ENCODE measurements at regions of chr14 and their contacts with region 1.

Region 1: DNA sequence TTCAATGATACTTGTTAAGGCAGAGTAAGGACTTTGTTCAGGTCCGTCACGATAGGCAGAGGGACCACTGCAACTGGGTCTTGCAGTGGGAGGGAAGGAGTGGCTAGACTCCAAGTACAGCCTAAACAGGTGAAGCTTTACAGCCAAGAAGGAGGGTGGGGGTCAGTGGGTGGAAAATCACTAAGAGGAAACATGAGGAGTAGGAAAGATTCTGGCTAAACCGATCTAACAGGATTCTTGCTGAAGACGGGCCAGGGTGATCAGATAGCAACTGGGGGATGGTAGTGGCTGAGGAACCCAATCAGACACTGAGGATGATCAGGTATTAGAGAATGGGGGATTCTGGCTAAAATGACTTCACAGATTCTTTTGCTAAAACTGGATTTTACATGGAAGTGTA is 100.2 kb downstream of the TTC7B start:
- DNase-seq: no peak
- H3K4me3 ChIP-seq: no peak overlapping the region
- H3K27ac ChIP-seq: no peak overlapping the region
- H3K4me1 ChIP-seq: peaks cover 11% of the 10 kb centered on the region
- H3K27me3 ChIP-seq: no peaks in the 10 kb centered on the region
- CTCF ChIP-seq: no peak

Region 2: GRCh38 chr14:90235179-90235976 is 480.6 kb before region 1 on chr14:
- CTCF ChIA-PET with region 1: no interaction called
- POLR2A ChIA-PET with region 1: no interaction called
- intact Hi-C with region 1: no loop called
- DNase-seq: peak; percentile 82
- H3K4me3 ChIP-seq: no peak overlapping the region
- H3K27ac ChIP-seq: no peak overlapping the region
- H3K4me1 ChIP-seq: no peaks in the 10 kb centered on the region
- H3K27me3 ChIP-seq: no peaks in the 10 kb centered on the region
- CTCF ChIP-seq: peak; percentile 94

Region 3: DNA sequence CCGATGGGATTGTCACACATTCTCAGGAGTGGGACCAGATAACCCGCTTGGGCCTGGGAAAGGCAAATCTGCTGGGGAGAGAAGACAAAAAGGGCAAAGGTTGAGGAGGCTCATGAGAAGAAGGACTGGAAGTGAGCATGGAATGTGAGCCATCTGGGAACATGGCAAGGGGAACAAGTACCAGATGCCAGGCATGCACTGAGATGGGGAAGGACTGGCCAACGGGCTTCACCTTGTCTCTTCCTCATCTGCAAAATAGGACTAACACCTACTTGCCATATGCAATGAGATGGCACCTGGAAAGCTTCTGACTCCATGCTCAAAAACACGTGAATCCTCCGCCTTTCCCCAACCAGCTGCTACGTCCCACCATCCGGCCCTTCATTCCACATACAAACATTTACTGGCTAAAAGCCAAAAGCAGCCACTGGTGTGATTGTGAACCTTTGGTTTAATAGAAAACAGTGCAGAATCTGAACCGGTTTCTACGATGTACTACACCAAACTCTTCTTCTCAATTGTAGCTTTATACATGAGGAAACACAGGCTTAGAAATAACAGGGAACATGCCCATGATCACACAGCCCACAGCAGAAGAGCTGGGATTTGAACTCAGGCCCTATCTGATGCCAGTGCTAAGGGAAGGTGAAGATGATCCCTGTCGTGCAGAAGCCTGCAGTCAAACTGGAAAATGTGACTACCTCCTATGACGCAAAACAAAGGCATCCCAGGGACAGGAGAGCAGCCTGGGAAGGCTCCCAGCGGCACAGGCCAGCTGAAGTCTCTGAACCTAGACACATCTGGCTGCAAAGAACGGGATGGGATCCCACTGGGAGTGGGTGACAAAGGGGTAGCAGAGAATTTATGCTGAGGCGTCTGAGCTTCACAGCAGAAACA is 11.9 kb before region 1 on chr14:
- CTCF ChIA-PET with region 1: interaction called, 5 read pairs
- POLR2A ChIA-PET with region 1: no interaction called
- intact Hi-C with region 1: loop called (anchors 1 kb)
- DNase-seq: no peak
- H3K4me3 ChIP-seq: no peak overlapping the region
- H3K27ac ChIP-seq: no peak overlapping the region
- H3K4me1 ChIP-seq: peaks cover 16% of the 10 kb centered on the region
- H3K27me3 ChIP-seq: no peaks in the 10 kb centered on the region
- CTCF ChIP-seq: no peak

Region 4: DNA sequence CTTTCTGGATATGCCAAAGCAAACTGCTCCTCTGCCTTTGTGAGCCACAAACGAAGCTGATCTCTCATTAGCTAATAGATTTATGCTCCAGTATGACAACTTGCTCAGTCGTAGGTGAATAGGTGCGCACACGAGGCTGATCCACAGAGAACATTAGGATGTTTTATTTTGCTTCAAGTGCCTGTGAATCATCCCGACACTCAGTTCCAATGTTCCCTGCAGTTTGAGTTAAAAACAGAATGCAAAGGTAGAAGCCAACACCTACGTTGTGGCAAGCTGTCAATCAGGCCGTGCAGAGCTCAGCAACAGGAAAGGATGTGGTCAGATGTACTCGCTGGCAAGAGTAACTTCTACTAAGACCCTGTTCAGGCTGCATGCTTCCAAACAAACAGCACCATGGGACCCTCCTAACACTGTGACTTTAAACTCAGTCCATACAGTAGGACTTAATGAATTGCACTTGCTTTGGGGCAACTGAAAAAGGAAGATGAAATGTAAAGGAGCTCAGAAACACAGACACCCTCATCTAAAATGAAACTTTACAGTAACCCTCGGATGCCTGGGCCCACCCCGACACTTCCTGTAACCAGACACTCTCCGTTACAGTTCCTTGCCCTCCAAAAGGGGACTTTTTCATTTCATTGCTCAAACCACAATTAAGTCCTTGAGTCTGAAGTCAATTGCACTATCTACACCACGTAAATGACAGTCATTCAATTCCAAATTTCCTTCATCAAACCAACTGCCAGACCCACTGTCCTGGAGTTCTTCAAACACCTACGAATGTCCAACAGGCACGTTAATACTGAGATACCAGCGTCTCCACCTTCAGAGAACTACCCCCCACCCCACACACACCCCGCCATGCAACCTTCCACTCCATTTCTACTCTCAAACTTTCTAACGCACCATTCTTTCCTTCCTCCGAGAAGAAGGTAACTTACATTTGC is 700.1 kb after region 1 on chr14:
- CTCF ChIA-PET with region 1: no interaction called
- POLR2A ChIA-PET with region 1: no interaction called
- intact Hi-C with region 1: no loop called
- DNase-seq: peak; percentile 79
- H3K4me3 ChIP-seq: peak overlapping the region; percentile 89
- H3K27ac ChIP-seq: peak overlapping the region; percentile 71
- H3K4me1 ChIP-seq: peaks cover 20% of the 10 kb centered on the region
- H3K27me3 ChIP-seq: no peaks in the 10 kb centered on the region
- CTCF ChIP-seq: no peak